ENCODE measurements at regions of chr11 and their contacts with region 1.

Region 1: DNA sequence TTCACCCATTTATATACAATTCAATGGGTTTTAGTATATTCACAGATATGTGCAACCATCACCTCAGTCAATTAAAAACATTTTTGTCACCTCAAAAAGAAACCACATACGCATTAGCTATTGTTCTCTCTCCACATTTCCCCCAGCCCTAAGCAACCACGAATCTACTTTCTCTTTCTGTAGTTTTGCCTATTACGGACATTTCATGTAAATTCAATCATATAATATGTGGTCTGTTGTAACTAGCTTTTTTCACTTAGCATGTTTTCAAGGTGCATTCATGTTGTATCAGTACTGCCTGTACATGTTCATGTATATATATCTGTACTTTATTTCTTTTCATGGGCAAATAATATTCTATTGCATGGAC is 104.7 kb upstream of the RRM1 start:
- DNase-seq: peak; percentile 25
- ATAC-seq: peak; percentile 69
- H3K4me3 Mint-ChIP-seq: peak overlapping the region; percentile 53
- H3K27ac Mint-ChIP-seq: peak overlapping the region; percentile 74
- H3K4me1 Mint-ChIP-seq: peaks cover 62% of the 10 kb centered on the region
- H3K27me3 Mint-ChIP-seq: no peaks in the 10 kb centered on the region

Region 2: DNA sequence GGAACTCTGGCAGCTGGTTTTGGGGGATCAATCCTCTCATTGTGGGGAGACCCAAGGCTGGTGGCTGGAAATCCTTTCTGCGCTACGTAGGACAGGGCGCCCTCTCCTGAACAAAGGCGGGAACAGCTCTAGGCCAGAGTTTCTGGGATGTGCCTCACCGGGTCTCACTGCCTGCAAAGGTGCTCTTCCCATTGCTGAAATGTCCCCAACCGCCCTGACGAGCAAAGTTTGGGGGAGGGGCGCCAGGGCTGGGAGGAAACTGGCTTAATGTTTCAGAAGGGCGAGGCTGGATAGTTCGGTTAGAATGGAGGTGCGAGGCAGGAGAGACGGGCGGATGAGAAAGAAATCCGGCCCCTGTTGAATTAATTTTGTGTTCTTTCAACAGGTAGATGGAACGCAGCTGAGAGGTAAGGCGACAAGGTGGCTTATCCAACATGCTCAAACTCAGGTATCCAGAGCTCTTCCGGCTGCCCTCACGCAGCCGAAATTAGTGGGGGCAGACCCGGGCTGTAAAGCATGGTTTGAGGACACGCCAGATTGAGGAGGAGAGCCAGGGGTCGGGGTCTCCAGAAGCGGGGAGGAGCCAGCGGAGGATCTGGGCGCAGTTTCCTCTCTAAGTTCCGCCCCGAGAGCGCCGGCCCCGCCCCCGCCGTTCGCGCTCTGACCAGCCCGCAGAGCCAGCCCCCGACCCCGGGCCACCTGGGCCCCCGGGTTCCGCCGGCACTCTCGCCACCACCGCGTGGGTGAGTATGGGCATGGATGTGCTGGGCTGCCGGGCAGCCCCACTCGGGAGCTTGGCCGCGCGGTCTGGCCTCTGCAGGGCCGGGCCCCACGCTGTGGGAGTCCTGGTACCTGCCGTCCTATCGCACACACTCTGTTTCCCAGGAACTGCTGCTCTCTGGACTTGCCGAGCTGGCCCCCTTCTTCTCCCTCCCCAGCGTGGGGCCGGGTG is 181.7 kb before region 1 on chr11 and contains the start of gene PGAP2:
- CTCF ChIA-PET with region 1: no interaction called
- POLR2A ChIA-PET with region 1: no interaction called
- intact Hi-C with region 1: no loop called
- DNase-seq: peak; percentile 77
- ATAC-seq: peak; percentile 78
- H3K4me3 Mint-ChIP-seq: peak within 1 kb of the TSS; percentile 93
- H3K27ac Mint-ChIP-seq: peak within 1 kb of the TSS; percentile 94
- H3K4me1 Mint-ChIP-seq: peaks cover 24% of the 10 kb centered on the region
- H3K27me3 Mint-ChIP-seq: no peaks in the 10 kb centered on the region
- total RNA-seq, gene PGAP2: 33.6 to 39.2 TPM

Region 3: DNA sequence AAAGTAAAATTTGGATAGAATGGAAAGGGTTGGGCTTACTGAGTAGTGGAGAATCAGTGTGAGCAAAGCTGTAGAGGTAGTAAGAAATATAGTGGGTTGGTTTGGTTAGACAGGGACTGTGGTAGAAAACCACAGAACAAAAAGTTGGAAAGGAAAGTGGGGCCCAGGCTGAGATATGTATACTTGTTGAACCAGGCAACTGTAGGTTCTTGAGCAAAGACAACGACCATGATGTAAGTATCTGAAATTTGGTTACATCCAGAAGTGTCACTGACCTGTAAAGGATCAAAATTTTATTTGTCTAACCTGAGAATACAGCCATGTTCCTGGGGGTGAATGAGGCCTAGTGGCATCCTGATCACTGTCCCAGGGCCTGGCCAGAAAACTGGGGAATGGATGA is 20.3 kb before region 1 on chr11:
- CTCF ChIA-PET with region 1: interaction called, 3 read pairs
- POLR2A ChIA-PET with region 1: no interaction called
- intact Hi-C with region 1: loop called in 1 of 2 experiments (anchors 1 kb)
- DNase-seq: peak; percentile 59
- ATAC-seq: peak; percentile 77
- H3K4me3 Mint-ChIP-seq: peak overlapping the region; percentile 26
- H3K27ac Mint-ChIP-seq: peak overlapping the region; percentile 92
- H3K4me1 Mint-ChIP-seq: peaks cover 77% of the 10 kb centered on the region
- H3K27me3 Mint-ChIP-seq: no peaks in the 10 kb centered on the region

Region 4: DNA sequence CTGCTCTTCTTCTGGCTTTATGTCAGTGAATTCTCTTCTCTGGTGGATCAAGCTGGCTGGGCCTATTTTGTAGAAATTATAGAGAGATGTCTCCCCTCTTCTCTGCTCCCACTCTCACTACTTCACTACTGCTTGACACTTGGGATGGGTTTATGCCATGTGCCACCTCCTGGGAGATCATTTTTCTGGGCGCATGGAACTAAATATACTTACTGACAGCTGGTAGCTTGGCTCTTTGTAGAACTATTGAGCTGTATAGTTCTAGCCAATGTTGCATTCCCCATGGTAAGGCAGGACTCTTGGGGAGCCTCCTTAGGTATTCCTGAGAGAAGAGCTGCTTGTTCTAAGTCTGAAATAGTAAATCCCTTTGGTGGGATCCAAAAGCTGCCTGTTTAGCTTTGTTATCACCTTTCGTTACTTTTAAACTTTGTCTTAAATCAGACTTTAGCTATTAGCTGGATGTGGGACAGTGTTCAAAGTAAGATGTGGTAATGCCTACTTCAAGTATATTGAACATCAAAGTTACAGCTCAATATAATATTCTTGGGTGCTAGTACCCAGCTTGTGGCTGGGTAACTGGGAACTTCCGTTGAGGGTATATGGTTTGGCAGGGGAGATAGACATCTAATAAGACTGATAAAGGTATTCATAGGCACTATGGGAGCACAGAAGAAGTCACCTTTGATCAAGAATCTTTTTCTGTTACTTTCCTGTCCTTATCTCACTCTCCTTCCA is 17.2 kb after region 1 on chr11:
- CTCF ChIA-PET with region 1: no interaction called
- POLR2A ChIA-PET with region 1: no interaction called
- intact Hi-C with region 1: no loop called
- DNase-seq: no peak
- ATAC-seq: no peak
- H3K4me3 Mint-ChIP-seq: no peak overlapping the region
- H3K27ac Mint-ChIP-seq: no peak overlapping the region
- H3K4me1 Mint-ChIP-seq: peaks cover 29% of the 10 kb centered on the region
- H3K27me3 Mint-ChIP-seq: no peaks in the 10 kb centered on the region